Gastrocnemius medialis (tissue), 4 donors: ENCODE measurements at regions of chr15 and their contacts with region 1.

Region 1: DNA sequence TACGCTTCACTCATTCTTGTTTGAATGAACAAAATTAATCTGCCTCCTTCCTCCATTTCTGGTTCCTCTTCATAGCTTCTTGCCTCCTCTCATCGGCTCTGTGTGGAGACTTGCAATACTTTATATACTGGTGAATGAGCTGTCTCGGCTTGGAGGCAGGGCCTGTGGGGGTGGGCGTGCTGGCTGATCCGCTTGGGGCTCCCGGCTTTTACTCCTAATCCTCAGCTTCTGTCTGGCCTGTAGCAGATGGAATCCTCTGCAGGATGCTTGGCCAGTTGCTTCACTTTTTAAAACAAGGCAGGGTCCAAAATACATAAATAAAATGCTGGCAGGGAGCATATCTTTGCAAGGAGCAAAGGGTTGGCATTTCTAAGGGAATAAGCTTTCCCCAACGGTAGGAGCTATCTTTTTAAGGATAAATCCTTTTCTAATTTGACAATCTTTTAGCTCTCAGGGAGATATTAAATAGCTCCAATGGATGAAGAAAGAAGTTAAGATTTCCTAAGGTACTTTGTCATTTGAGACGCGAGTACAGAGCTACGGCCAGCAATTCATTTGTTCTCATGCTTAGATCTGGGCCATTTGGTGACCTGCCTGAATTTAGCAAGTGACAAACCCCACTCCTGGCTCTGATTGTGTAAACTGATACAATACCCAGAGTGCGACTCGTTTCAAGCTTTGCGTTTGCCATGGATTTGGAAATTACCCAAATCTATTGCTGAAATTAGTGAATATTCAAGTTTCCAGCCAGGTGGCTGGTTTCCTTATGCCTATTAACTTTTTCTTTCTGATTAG is 18.9 kb downstream of the SV2B start:
- DNase-seq: peak; percentile 48 to 66
- ATAC-seq: peak; percentile 84 to 94
- H3K4me3 ChIP-seq: no peak overlapping the region
- H3K27ac ChIP-seq: peak overlapping the region; percentile 46 to 85 (median 57)
- H3K4me1 ChIP-seq: peaks cover 13 to 36% of the 10 kb centered on the region in 2 donors
- H3K27me3 ChIP-seq: no peaks in the 10 kb centered on the region
- CTCF ChIP-seq: no peak
- POLR2A ChIP-seq: no peak

Region 2: GRCh38 chr15:91216000-91216399 is 97.0 kb after region 1 on chr15:
- in situ Hi-C with region 1: no loop called
- intact Hi-C with region 1: loop called (anchors 1 kb)
- DNase-seq: peak; percentile 54 to 66
- ATAC-seq: peak; percentile 96
- H3K4me3 ChIP-seq: no peak overlapping the region
- H3K27ac ChIP-seq: peak overlapping the region; percentile 46 to 74 (median 71)
- H3K4me1 ChIP-seq: peaks cover 11 to 22% of the 10 kb centered on the region in 2 donors
- H3K27me3 ChIP-seq: no peaks in the 10 kb centered on the region
- CTCF ChIP-seq: no peak
- POLR2A ChIP-seq: no peak